ENCODE measurements at regions of chr11 and their contacts with region 1.

Region 1: GRCh38 chr11:86456052-86456939 is 81.6 kb downstream of the CCDC81 start:
- DNase-seq: peak; percentile 88
- H3K4me3 Mint-ChIP-seq: no peak overlapping the region
- H3K27ac Mint-ChIP-seq: no peak overlapping the region
- H3K4me1 Mint-ChIP-seq: peaks cover 16% of the 10 kb centered on the region
- H3K27me3 Mint-ChIP-seq: no peaks in the 10 kb centered on the region

Region 2: GRCh38 chr11:86047275-86047991 is 408.9 kb before region 1 on chr11:
- CTCF ChIA-PET with region 1: no interaction called
- POLR2A ChIA-PET with region 1: no interaction called
- intact Hi-C with region 1: no loop called
- DNase-seq: peak; percentile 81
- H3K4me3 Mint-ChIP-seq: peak overlapping the region; percentile 60
- H3K27ac Mint-ChIP-seq: peak overlapping the region; percentile 99
- H3K4me1 Mint-ChIP-seq: peaks cover 93% of the 10 kb centered on the region
- H3K27me3 Mint-ChIP-seq: no peaks in the 10 kb centered on the region

Region 3: DNA sequence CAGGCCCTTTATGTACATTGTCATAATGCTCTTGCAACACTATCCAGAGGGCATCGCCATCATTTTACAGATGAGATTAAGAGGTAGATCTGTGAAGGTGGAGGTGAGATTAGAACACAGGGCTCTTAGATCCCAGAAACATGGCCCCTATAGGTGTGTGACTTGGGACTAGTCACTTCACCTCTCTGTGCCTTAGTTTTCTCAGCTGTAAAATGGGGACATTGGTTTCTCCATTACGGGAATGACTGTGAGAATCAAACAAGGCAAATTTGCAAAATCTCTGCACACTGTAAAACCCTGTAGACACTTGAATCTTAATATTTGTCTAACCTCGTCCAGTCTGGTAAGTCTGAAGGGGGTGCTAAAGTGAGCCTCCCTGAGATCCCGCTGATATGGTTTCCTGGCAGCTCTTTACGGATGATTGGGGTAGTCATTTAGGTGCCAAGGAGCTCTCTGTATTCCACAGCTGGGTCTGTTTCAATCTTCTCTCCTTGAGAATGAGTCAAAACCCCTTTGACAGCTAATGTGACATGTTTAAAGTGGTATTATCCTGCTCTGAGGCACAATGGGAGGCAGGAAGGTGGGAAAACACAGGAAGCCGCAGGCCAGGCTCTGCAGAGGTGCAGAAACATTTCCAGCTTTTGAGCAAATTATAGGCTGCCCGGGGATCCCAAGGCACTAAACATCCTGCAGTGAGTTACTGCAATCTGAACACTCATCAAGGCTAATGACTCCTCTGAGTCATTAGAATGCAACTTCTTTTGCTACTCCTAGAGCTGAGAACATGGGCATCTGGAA is 59.2 kb after region 1 on chr11:
- CTCF ChIA-PET with region 1: no interaction called
- POLR2A ChIA-PET with region 1: no interaction called
- intact Hi-C with region 1: no loop called
- DNase-seq: no peak
- H3K4me3 Mint-ChIP-seq: no peak overlapping the region
- H3K27ac Mint-ChIP-seq: no peak overlapping the region
- H3K4me1 Mint-ChIP-seq: no peaks in the 10 kb centered on the region
- H3K27me3 Mint-ChIP-seq: no peaks in the 10 kb centered on the region

Region 4: DNA sequence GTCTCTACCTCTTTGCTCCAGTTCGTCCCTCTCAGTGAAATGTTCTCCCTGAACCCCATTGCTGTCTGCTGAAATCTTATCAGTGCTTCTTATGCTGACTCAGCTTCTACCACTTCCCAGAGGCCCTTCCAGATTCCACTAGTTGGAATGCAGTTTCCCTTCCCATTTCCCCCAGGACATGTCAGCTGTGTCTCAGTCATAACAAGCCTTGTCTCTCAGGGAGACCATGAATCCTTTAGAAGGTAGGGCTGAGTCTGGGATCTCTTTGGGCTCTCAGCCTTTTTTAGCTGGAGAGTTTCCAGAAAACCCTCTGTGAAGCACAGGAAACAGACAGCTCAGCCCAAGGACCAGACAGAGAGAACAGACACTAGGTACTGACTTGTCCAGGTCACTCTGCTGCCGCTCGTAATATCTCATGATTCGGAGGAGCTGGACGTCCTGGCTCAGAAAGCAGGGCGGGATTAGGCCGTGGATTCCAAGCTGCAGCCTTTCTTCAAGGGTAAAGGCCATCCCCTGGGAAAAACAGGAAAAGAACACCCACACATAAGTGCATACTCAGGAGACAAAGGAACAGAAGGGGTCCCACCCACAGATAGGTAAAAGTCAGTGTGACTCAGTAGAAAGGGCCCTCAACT is 103.1 kb after region 1 on chr11:
- CTCF ChIA-PET with region 1: no interaction called
- POLR2A ChIA-PET with region 1: no interaction called
- intact Hi-C with region 1: no loop called
- DNase-seq: no peak
- H3K4me3 Mint-ChIP-seq: no peak overlapping the region
- H3K27ac Mint-ChIP-seq: no peak overlapping the region
- H3K4me1 Mint-ChIP-seq: no peaks in the 10 kb centered on the region
- H3K27me3 Mint-ChIP-seq: no peaks in the 10 kb centered on the region

Region 5: GRCh38 chr11:86608251-86608799 is 152.0 kb after region 1 on chr11:
- CTCF ChIA-PET with region 1: interaction called, 65 read pairs
- POLR2A ChIA-PET with region 1: interaction called, 3 read pairs
- intact Hi-C with region 1: loop called (anchors 1 kb)
- DNase-seq: peak; percentile 59
- H3K4me3 Mint-ChIP-seq: no peak overlapping the region
- H3K27ac Mint-ChIP-seq: no peak overlapping the region
- H3K4me1 Mint-ChIP-seq: peaks cover 10% of the 10 kb centered on the region
- H3K27me3 Mint-ChIP-seq: peaks cover 2% of the 10 kb centered on the region

Region 6: DNA sequence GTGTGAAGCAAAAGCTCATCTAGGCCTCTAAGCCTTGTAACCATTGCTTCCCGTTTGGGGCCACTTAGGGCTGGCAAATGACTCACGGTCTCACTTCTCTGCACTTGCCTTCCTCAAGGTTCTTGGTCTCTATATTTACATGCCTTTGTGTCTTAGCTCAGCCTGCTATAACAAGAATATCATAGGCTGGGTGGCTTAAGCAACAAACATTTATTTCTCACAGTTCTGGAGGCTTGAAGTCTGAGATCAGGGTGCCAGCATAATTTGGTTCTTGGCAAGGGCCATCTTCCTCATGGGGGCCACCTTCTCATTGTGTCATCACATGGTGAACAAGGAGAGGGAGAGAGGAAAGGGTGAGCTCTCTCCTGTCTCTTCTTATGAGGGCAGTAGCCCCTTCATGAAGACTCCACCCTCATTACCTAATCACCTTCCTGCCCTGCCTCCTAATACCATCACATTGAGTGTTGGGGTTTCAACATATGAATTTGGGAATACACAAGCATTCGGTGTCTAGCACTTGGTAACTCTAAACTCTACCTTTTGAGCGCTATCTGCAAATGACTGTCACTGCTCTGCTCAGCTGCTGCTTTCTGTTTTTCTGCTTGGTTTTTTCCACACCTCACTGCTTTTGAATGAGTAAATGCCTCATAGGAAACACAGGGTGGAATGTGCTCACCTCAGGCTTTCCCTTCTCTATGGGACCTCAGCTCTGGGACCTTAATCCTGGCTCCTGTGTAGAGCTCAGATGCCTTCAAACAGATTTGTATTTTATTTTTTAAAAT is 232.3 kb after region 1 on chr11:
- CTCF ChIA-PET with region 1: no interaction called
- POLR2A ChIA-PET with region 1: no interaction called
- intact Hi-C with region 1: loop called (anchors 5 kb)
- DNase-seq: peak; percentile 61
- H3K4me3 Mint-ChIP-seq: no peak overlapping the region
- H3K27ac Mint-ChIP-seq: peak overlapping the region; percentile 83
- H3K4me1 Mint-ChIP-seq: peaks cover 20% of the 10 kb centered on the region
- H3K27me3 Mint-ChIP-seq: peaks cover 9% of the 10 kb centered on the region

Region 7: DNA sequence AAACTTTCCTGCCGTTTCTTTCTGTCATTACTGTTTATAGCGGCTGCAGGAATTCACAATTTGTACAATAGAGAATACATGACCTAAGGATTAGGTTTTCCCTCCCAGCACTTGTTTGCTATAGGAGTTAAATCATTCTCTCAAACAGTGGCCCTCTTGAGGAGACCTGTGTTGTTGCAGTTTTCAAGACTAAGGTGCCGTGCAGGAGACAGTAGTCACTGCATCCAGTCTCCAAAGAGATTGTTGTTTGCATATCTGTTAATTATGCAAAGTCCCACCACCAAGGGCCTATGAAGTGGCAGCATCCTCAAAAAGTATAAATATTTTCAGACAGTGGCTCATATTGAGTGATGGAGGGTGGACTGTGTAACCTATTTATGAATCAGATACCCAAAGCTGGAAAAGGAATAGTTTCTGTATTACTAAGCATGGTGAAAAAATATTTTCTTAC is 346.3 kb after region 1 on chr11:
- CTCF ChIA-PET with region 1: interaction called, 8 read pairs
- POLR2A ChIA-PET with region 1: no interaction called
- intact Hi-C with region 1: loop called (anchors 1 kb)
- DNase-seq: peak; percentile 27
- H3K4me3 Mint-ChIP-seq: no peak overlapping the region
- H3K27ac Mint-ChIP-seq: no peak overlapping the region
- H3K4me1 Mint-ChIP-seq: peaks cover 57% of the 10 kb centered on the region
- H3K27me3 Mint-ChIP-seq: peaks cover 51% of the 10 kb centered on the region

Region 8: DNA sequence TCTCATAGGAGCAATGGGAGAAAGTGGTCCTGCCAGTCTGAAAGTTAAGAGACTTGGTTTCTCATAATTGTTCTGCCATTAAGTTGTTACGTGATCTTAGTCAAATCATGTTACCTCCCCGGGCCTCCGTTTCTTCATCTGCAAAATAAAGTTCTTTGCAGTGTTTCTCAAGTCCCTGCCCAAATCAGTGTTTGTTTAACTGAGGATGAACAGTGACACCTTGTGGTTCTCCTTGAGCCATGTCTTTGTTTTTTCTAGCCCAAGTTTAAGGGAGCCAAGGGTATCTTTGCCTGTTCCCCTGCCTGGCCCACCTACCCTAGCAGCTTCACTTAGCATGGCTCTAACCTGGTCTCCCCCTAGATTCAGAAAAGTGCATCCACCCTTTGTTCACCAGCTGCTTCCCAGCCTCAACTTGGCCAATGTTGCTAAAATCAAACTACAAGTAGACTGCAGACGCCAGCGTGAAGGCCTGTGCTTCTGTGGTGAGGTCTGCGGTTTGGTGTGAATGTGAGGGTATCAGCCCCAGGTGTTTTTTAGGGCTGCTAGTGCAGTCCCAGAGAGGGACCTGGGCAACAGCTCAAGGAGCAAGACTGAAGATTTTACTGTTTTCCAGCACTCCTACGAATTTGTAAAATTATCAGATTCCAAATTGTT is 463.4 kb after region 1 on chr11:
- CTCF ChIA-PET with region 1: no interaction called
- POLR2A ChIA-PET with region 1: no interaction called
- intact Hi-C with region 1: loop called (anchors 2 kb)
- DNase-seq: no peak
- H3K4me3 Mint-ChIP-seq: no peak overlapping the region
- H3K27ac Mint-ChIP-seq: no peak overlapping the region
- H3K4me1 Mint-ChIP-seq: no peaks in the 10 kb centered on the region
- H3K27me3 Mint-ChIP-seq: peaks cover 1% of the 10 kb centered on the region

Region 9: DNA sequence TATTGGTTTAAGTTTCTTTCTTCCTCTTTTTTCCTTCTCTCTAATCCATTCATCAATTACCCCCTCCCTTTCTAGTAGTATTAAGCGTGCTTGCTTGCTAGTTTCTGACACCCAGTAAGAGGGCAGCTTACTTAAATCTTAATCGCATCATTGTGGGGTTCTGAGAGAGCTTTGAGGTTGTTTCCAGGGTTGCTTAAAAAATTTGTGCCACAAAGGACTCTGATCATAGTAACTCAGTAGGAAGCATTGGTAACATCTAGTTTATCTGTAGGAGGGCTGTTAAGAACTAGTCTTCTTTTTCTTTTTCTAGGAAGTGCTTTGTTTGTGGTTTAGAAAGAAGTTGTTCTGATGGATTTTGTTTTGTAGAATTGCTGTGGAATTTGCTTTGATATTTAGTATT is 626.7 kb after region 1 on chr11:
- CTCF ChIA-PET with region 1: no interaction called
- POLR2A ChIA-PET with region 1: no interaction called
- intact Hi-C with region 1: no loop called
- DNase-seq: no peak
- H3K4me3 Mint-ChIP-seq: no peak overlapping the region
- H3K27ac Mint-ChIP-seq: no peak overlapping the region
- H3K4me1 Mint-ChIP-seq: peaks cover 21% of the 10 kb centered on the region
- H3K27me3 Mint-ChIP-seq: no peaks in the 10 kb centered on the region